IMR-90 (cell line): ENCODE measurements at regions of chr7 and their contacts with region 1.

Region 1: GRCh38 chr7:50481867-50482266 is 31.7 kb upstream of the FIGNL1 start:
- DNase-seq: no peak
- ATAC-seq: no peak
- H3K4me3 ChIP-seq: no peak overlapping the region
- H3K27ac ChIP-seq: no peak overlapping the region
- H3K4me1 ChIP-seq: no peaks in the 10 kb centered on the region
- H3K27me3 ChIP-seq: peaks cover 1% of the 10 kb centered on the region; the same call in 1 of the 2 replicates
- CTCF ChIP-seq: no peak
- POLR2A ChIP-seq: no peak
- RAD21 ChIP-seq: no peak

Region 2: GRCh38 chr7:50246551-50246950 is 235.3 kb before region 1 on chr7:
- CTCF ChIA-PET with region 1: no interaction called
- POLR2A ChIA-PET with region 1: no interaction called
- dilution Hi-C with region 1: no loop called
- in situ Hi-C with region 1: no loop called
- intact Hi-C with region 1: no loop called
- DNase-seq: no peak
- ATAC-seq: no peak
- H3K4me3 ChIP-seq: no peak overlapping the region
- H3K27ac ChIP-seq: no peak overlapping the region
- H3K4me1 ChIP-seq: no peaks in the 10 kb centered on the region
- H3K27me3 ChIP-seq: no peaks in the 10 kb centered on the region
- CTCF ChIP-seq: no peak
- POLR2A ChIP-seq: no peak
- RAD21 ChIP-seq: no peak

Region 3: DNA sequence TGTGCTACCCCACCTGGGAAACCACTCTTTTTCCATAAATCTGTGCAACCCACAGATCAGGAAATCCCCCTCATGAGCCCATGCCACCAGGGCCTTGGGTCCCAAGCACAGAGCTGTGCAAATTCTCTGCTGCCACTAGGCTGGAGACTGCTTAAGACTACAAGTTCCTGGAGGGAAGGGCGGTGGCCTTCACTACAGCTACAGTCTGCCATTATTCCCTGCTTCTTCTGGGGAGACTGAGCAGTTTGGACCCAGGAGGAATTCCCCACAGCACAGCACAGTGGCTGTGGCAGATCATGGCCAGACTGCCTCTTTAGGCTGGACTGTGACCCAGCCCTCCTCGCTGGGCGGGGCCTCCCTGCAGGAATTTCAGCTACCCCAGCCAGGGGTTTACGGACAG is 390.6 kb after region 1 on chr7:
- CTCF ChIA-PET with region 1: no interaction called
- POLR2A ChIA-PET with region 1: no interaction called
- dilution Hi-C with region 1: no loop called
- in situ Hi-C with region 1: no loop called
- intact Hi-C with region 1: no loop called
- DNase-seq: no peak
- ATAC-seq: no peak
- H3K4me3 ChIP-seq: no peak overlapping the region
- H3K27ac ChIP-seq: no peak overlapping the region
- H3K4me1 ChIP-seq: peaks cover 4% of the 10 kb centered on the region
- H3K27me3 ChIP-seq: peaks cover 2% of the 10 kb centered on the region; the same call in 1 of the 2 replicates
- CTCF ChIP-seq: no peak
- POLR2A ChIP-seq: no peak
- RAD21 ChIP-seq: no peak

Region 4: DNA sequence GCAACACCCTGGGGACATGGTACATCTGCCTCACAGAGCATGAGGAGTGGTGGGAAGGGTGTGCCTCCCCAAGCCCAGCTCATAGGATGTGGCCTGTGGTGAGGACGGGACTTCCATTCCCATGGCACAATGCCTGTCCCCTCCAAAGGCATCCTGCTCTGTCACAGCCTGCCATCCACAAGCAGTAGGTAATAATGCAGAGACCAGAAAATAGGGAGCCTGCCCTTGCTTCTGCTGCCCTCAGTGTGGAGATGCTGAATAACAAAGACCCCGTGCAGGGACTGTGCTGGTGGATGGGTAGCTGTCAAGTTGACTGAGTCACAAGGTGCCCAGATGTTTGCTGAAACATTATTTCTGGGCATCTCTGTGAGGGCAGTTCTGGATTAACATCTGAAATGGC is 500.8 kb after region 1 on chr7:
- CTCF ChIA-PET with region 1: no interaction called
- POLR2A ChIA-PET with region 1: no interaction called
- dilution Hi-C with region 1: no loop called
- in situ Hi-C with region 1: no loop called
- intact Hi-C with region 1: loop called (anchors 10 kb)
- DNase-seq: no peak
- ATAC-seq: no peak
- H3K4me3 ChIP-seq: no peak overlapping the region
- H3K27ac ChIP-seq: no peak overlapping the region
- H3K4me1 ChIP-seq: no peaks in the 10 kb centered on the region
- H3K27me3 ChIP-seq: peaks cover 16% of the 10 kb centered on the region
- CTCF ChIP-seq: no peak
- POLR2A ChIP-seq: no peak
- RAD21 ChIP-seq: no peak